Endothelial cell of umbilical vein (primary cell): ENCODE measurements at regions of chr2 and their contacts with region 1.

Region 1: GRCh38 chr2:11743846-11744553 is 2.4 kb upstream of the LPIN1 start:
- DNase-seq: peak; percentile 99
- H3K4me3 ChIP-seq: peak overlapping the region in 1 of 3 experiments; percentile 20
- H3K27ac ChIP-seq: peak overlapping the region; percentile 82
- H3K4me1 ChIP-seq: peaks cover 55% of the 10 kb centered on the region
- H3K27me3 ChIP-seq: no peaks in the 10 kb centered on the region
- CTCF ChIP-seq: no peak
- POLR2A ChIP-seq: no peak

Region 2: DNA sequence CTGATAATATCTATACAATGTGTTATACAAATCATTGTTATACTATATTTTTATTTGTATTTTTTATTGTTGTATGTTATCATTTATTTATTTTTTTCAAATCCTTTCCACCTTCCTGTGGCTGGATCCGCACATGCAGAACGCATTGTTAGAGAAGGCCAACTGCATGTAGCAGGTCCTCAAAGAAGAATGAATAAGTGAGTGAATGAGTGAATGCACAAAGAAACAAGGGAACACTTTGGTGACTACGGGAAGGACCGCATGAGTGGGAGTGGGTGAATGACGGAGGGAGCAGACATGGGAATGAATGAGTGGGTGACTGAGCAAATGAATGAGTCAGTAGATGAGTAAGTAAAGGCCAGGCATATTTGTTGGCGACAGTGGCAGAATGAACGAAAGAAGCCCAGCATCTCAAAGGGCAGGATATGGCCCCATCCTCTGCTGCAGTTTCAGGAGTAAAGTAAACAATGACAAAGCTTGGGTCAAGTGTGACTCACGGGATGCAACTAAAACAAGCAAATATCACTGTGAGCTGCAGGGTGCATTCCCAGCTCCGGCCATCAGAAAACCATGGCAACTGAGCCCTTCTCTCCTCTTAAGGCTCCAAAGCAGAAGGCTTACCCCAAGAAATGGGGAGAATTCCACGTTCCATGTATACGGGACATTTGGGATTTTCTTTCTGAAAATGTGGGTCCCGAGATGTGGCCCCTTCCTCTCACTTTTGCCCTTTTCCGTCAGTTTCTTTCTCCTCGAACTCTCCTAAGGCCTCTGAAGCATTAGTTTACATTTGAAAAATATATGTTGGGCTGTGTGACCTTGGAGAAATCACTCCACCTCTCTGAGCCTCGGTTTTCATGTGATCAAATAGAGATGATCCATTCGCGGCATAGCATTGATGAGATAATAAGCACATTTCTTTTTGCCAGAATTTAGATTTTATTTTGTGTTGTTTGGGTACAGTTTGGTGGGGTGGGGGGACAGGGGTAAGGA is 807.8 kb before region 1 on chr2:
- CTCF ChIA-PET with region 1: no interaction called
- POLR2A ChIA-PET with region 1: no interaction called
- dilution Hi-C with region 1: no loop called
- intact Hi-C with region 1: loop called (anchors 10 kb)
- DNase-seq: peak; percentile 96
- H3K4me3 ChIP-seq: no peak overlapping the region
- H3K27ac ChIP-seq: peak overlapping the region; percentile 88
- H3K4me1 ChIP-seq: peaks cover 31% of the 10 kb centered on the region
- H3K27me3 ChIP-seq: peaks cover 0 to 2% of the 10 kb centered on the region in 2 experiments
- CTCF ChIP-seq: no peak
- POLR2A ChIP-seq: no peak

Region 3: GRCh38 chr2:11097038-11097720 is 646.8 kb before region 1 on chr2:
- CTCF ChIA-PET with region 1: no interaction called
- POLR2A ChIA-PET with region 1: no interaction called
- dilution Hi-C with region 1: no loop called
- intact Hi-C with region 1: no loop called
- DNase-seq: no peak
- H3K4me3 ChIP-seq: no peak overlapping the region
- H3K27ac ChIP-seq: no peak overlapping the region
- H3K4me1 ChIP-seq: no peaks in the 10 kb centered on the region
- H3K27me3 ChIP-seq: no peaks in the 10 kb centered on the region
- CTCF ChIP-seq: no peak
- POLR2A ChIP-seq: no peak

Region 4: DNA sequence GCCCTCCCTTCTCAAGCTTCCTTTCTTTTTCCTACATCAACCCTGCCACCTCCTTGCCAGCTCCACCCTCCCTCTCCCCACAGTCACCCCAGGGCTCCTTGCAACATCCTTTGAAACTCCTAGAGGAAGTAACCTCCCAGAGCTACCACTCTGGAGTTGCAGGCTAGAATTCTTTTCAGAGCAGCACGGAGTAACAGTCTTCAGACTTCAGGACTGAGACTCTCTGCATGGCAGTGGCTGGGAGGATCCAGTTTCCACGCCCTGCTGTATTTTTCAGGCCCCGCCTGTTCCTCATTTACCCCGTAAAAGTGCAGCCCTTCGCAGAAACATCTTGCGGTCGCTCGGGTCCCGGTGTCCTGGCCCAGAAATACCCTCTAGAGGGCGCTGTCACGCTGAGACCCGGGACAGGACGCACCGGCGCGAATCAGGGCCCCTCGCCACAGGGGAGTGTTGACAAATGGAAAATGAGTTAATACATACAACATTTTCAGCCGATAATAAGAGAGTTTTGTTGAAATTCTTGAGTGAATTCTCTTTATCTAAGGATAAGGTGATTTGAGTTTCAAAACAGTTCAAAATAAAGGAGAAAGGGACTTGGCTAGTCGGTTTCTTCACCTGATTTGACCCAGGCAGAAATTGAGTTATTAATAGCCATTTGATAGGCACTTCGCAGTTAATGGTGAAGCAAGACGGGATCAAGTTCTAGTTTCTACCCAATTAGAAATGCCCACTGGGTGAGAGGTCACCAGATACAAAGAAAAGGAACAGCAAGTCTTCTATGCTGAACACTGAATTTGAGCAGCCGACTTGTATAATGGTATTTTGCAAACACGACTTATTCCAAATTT is 55.6 kb before region 1 on chr2:
- CTCF ChIA-PET with region 1: interaction called, 21 read pairs
- POLR2A ChIA-PET with region 1: interaction called, 3 read pairs
- dilution Hi-C with region 1: no loop called
- intact Hi-C with region 1: loop called (anchors 1 kb)
- DNase-seq: peak; percentile 84
- H3K4me3 ChIP-seq: peak overlapping the region in 1 of 3 experiments; percentile 7
- H3K27ac ChIP-seq: no peak overlapping the region
- H3K4me1 ChIP-seq: peaks cover 3% of the 10 kb centered on the region
- H3K27me3 ChIP-seq: peaks cover 4 to 8% of the 10 kb centered on the region in 2 experiments
- CTCF ChIP-seq: peak; percentile 88 to 91
- POLR2A ChIP-seq: no peak

Region 5: GRCh38 chr2:11753886-11754699 is 10.1 kb after region 1 on chr2:
- CTCF ChIA-PET with region 1: interaction called, 25 read pairs
- POLR2A ChIA-PET with region 1: interaction called, 7 read pairs
- dilution Hi-C with region 1: no loop called
- intact Hi-C with region 1: loop called (anchors 1 kb)
- DNase-seq: peak; percentile 86
- H3K4me3 ChIP-seq: peak overlapping the region in 1 of 3 experiments; percentile 41
- H3K27ac ChIP-seq: peak overlapping the region; percentile 78
- H3K4me1 ChIP-seq: peaks cover 30% of the 10 kb centered on the region
- H3K27me3 ChIP-seq: no peaks in the 10 kb centered on the region
- CTCF ChIP-seq: no peak
- POLR2A ChIP-seq: no peak

Region 6: DNA sequence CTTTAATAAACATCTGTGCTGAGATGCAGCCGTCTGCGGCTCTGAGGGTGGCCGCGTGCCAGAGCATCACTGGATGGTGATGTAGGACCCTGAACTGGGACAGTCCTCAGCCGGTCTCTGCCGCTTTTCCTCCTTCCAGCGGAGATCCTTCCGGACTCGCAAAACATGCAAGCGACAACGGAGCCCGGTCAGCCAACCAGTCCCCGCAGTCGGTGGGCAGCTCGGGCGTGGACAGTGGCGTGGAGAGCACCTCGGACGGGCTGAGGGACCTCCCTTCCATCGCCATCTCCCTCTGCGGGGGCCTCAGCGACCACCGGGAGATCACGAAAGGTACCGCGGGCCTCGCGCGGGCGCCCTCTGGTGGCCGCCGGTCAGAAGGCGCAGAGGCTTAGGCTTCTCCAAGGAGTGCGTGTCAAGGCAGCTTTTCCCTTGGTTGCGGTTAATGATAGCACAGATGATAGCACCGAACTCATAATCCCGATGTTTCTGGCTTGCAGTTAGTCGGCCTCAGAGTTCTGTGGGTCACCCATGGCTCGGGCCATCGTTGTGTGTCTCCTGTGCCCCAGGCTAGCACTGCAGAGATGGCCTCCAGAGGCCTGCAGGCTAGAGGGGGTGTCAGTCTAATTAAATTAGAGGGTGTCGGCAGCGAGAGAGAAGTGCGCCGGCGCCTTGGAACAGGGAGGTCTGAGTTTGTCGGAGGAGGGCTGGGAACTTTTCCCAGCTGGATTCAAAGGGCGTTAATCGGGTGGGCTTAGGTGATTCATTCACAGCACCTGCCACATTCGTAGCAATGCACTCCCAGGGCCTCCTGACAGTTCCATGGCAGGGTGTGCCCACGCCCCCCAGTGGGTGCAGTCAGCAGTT is 41.0 kb after region 1 on chr2:
- CTCF ChIA-PET with region 1: interaction called, 80 read pairs
- POLR2A ChIA-PET with region 1: no interaction called
- dilution Hi-C with region 1: no loop called
- intact Hi-C with region 1: no loop called
- DNase-seq: peak; percentile 49
- H3K4me3 ChIP-seq: peak overlapping the region in 1 of 3 experiments; percentile 26
- H3K27ac ChIP-seq: no peak overlapping the region
- H3K4me1 ChIP-seq: no peaks in the 10 kb centered on the region
- H3K27me3 ChIP-seq: no peaks in the 10 kb centered on the region
- CTCF ChIP-seq: peak; percentile 94 to 99
- POLR2A ChIP-seq: no peak